PC-9 (cell line): ENCODE measurements at regions of chr13 and their contacts with region 1.

Region 1: GRCh38 chr13:24495143-24495729 is 17.3 kb downstream of the PARP4 start:
- DNase-seq: peak; percentile 43 to 84
- H3K4me3 ChIP-seq: no peak overlapping the region
- H3K27ac ChIP-seq: peak overlapping the region; percentile 85
- H3K4me1 ChIP-seq: peaks cover 45% of the 10 kb centered on the region
- H3K27me3 ChIP-seq: no peaks in the 10 kb centered on the region
- CTCF ChIP-seq: no peak

Region 2: DNA sequence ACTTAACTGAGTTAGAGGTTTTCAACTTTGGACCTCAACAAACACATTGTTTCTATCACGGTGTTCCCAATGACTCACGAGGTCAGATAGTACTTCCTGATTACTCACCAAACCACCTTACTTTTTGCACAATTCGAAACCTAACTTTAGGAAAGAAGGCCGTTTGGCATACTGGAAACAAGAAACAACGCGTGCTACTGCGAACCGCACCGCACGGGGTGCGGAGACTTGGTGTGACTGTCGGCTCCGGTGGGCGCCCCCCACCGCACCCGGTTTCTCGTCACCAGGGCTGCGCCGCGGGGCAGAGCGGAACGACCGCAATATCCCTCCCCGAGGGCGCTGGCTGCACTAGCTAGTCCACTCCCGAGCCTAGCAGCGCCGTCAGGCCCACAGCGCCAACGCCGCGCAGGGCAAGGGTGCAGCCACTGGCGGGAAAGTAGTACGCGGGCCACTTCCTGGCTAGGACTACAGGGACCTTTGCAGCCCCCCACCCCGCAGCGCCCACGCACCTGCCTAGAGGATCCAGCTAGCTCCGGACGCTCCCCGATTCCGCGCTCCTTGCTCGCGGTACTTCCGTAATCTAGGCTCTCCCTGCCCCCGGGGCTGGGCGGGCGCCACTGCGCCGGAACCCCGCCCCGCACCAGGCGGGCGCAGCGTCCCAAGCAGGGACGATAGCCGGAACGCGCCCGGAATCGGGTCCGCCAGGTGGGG is 17.1 kb after region 1 on chr13 and contains the start of gene PARP4:
- CTCF ChIA-PET with region 1: no interaction called
- POLR2A ChIA-PET with region 1: no interaction called
- intact Hi-C with region 1: loop called (anchors 2 kb)
- DNase-seq: peak; percentile 77 to 97
- H3K4me3 ChIP-seq: peak within 1 kb of the TSS; percentile 77
- H3K27ac ChIP-seq: peak within 1 kb of the TSS; percentile 99
- H3K4me1 ChIP-seq: peaks cover 40% of the 10 kb centered on the region
- H3K27me3 ChIP-seq: no peaks in the 10 kb centered on the region
- CTCF ChIP-seq: no peak
- total RNA-seq, gene PARP4: 54.8 and 80.6 TPM in 2 replicates

Region 3: DNA sequence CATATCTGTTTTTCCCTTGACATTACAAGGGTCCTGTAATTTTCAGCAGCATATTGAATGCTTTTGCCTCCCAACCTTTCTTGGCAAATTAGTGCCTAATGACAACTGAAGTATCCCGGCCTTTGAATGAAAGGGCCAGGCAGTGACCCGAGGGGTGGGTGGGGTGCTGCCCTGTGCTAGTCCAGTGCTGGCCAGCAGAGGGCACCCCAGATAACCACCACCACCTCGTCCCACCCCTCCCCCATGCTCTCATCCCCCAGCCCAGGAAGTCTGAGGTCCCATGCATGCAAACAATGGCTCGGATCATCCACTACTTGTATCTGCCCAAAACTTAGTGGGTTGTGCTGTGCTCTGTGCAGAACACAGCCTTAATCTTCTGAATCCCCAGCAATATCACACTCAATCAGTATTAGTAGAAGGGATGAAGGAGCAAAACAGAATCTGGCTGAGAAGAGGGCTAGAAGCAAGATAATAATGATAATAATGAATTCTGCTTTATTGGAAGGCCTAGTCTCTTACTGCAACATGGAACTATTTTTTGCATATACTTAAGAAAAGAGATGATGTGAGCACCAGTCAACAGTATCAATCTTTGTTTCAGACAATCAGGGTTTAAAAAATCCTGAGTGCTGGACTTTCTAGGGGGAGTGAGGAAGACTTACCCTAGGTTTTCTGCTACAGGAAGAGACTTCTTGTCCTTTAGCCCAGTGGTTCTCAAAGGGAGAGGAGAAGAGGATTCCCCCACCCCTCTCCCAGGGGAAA is 188.8 kb after region 1 on chr13:
- CTCF ChIA-PET with region 1: no interaction called
- POLR2A ChIA-PET with region 1: no interaction called
- intact Hi-C with region 1: no loop called
- DNase-seq: peak in 1 of 2 experiments; percentile 51
- H3K4me3 ChIP-seq: no peak overlapping the region
- H3K27ac ChIP-seq: no peak overlapping the region
- H3K4me1 ChIP-seq: no peaks in the 10 kb centered on the region
- H3K27me3 ChIP-seq: peaks cover 13% of the 10 kb centered on the region
- CTCF ChIP-seq: peak; percentile 90